ENCODE measurements at regions of chr12 and their contacts with region 1.

Region 1: DNA sequence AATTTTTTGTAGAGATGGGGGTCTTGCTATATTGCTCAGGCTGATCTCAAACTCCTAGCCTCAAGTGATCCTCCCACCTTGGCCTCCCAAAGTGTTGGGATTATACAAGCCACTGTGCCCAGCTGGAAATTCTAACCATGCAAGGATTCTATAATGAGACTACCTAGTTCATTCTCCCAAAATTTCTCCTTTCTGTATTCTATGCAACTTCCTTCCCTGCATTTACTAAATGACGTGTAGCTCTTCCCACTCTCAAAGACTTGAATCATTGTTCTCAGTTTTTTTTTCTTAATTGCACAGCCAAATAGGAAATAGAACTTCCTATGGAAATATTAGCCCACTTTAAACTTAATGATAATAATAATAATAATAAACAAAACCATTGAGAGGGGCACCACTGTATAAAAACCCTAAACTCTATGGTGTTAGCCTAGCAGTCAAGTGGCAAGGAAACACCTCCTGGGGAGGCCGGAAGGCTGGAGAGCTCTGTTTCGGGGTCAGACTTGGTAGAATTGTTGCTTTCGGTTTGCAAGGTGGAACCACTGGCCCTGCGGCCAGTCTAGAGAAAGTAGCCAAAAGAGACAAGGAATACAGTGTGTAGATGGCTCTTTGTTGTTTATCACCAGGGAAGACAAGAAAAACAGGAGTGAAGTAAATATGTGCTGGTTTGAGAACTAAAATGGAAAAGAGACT is 40.0 kb upstream of the TESC start:
- DNase-seq: no peak
- H3K4me3 ChIP-seq: no peak overlapping the region
- CTCF ChIP-seq: no peak

Region 2: GRCh38 chr12:116687888-116688287 is 451.3 kb before region 1 on chr12:
- CTCF ChIA-PET with region 1: no interaction called
- POLR2A ChIA-PET with region 1: no interaction called
- DNase-seq: no peak
- H3K4me3 ChIP-seq: no peak overlapping the region
- CTCF ChIP-seq: peak; percentile 61

Region 3: GRCh38 chr12:117076410-117077372 is 62.5 kb before region 1 on chr12:
- CTCF ChIA-PET with region 1: no interaction called
- POLR2A ChIA-PET with region 1: no interaction called
- DNase-seq: no peak
- H3K4me3 ChIP-seq: no peak overlapping the region
- CTCF ChIP-seq: no peak

Region 4: GRCh38 chr12:117151195-117152031 is 12.2 kb after region 1 on chr12:
- CTCF ChIA-PET with region 1: interaction called, 11 read pairs
- POLR2A ChIA-PET with region 1: no interaction called
- DNase-seq: no peak
- H3K4me3 ChIP-seq: no peak overlapping the region
- CTCF ChIP-seq: peak; percentile 55

Measured in AG04449 (cell line).